IMR-90 (cell line): ENCODE measurements at regions of chr1 and their contacts with region 1.

Region 1: DNA sequence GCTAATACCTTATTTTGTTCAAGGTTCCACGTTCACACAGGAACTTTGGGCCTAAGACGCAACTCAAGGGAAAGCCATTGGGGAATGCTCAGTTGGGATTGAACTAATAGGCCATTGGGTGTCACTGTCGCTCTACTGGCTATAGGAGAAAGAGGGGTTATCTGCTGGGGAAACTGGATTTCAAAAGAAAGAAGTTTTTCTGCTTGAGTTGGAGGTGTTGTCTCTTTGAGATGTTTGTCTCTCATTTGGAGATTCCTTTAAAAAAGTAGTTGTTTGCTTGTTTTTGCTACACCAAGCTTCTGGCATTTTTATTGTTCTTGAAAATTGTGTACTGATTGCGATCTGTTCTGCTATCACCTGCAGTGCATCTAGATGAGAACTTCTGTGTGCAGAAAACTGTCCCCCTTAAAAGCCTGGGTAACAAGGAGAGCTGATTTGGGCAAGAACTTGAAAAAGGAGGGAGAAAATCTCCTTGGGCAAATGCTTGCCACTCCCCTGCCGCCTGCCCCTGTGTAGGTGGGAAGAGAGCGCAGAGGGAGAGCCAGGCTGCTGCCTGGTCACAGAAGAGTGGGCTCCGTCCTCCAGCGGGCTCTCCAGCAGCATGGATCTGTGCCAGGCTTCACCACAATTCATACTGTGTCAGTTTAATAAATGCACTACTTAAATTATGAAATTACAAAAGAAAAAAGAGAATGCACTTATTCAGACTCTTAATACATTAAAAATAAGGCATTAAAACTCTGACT is 39.9 kb downstream of the PEX14 start:
- DNase-seq: peak; percentile 61
- ATAC-seq: peak; percentile 24; the same call in 1 of the 2 replicates
- H3K4me3 ChIP-seq: no peak overlapping the region
- H3K27ac ChIP-seq: no peak overlapping the region
- H3K4me1 ChIP-seq: peaks cover 26% of the 10 kb centered on the region
- H3K27me3 ChIP-seq: no peaks in the 10 kb centered on the region
- CTCF ChIP-seq: peak; percentile 67
- POLR2A ChIP-seq: no peak
- RAD21 ChIP-seq: peak; percentile 82

Region 2: GRCh38 chr1:10484521-10484920 is 30.1 kb before region 1 on chr1:
- CTCF ChIA-PET with region 1: no interaction called
- POLR2A ChIA-PET with region 1: no interaction called
- dilution Hi-C with region 1: no loop called
- in situ Hi-C with region 1: no loop called
- intact Hi-C with region 1: no loop called
- DNase-seq: no peak
- ATAC-seq: no peak
- H3K4me3 ChIP-seq: no peak overlapping the region
- H3K27ac ChIP-seq: no peak overlapping the region
- H3K4me1 ChIP-seq: no peaks in the 10 kb centered on the region; the same call in 1 of the 2 replicates
- H3K27me3 ChIP-seq: no peaks in the 10 kb centered on the region
- CTCF ChIP-seq: no peak
- POLR2A ChIP-seq: no peak
- RAD21 ChIP-seq: no peak

Region 3: GRCh38 chr1:10502206-10502605 is 12.5 kb before region 1 on chr1:
- CTCF ChIA-PET with region 1: interaction called, 3 read pairs
- POLR2A ChIA-PET with region 1: interaction called, 13 read pairs
- dilution Hi-C with region 1: no loop called
- in situ Hi-C with region 1: no loop called
- intact Hi-C with region 1: no loop called
- DNase-seq: no peak
- ATAC-seq: no peak
- H3K4me3 ChIP-seq: no peak overlapping the region
- H3K27ac ChIP-seq: no peak overlapping the region
- H3K4me1 ChIP-seq: no peaks in the 10 kb centered on the region
- H3K27me3 ChIP-seq: no peaks in the 10 kb centered on the region
- CTCF ChIP-seq: no peak
- POLR2A ChIP-seq: no peak
- RAD21 ChIP-seq: no peak

Region 4: GRCh38 chr1:10765734-10766478 is 251.2 kb after region 1 on chr1:
- CTCF ChIA-PET with region 1: no interaction called
- POLR2A ChIA-PET with region 1: no interaction called
- dilution Hi-C with region 1: no loop called
- in situ Hi-C with region 1: no loop called
- intact Hi-C with region 1: no loop called
- DNase-seq: no peak
- ATAC-seq: no peak
- H3K4me3 ChIP-seq: no peak overlapping the region
- H3K27ac ChIP-seq: no peak overlapping the region
- H3K4me1 ChIP-seq: no peaks in the 10 kb centered on the region
- H3K27me3 ChIP-seq: peaks cover 46% of the 10 kb centered on the region
- CTCF ChIP-seq: no peak
- POLR2A ChIP-seq: no peak
- RAD21 ChIP-seq: no peak

Region 5: DNA sequence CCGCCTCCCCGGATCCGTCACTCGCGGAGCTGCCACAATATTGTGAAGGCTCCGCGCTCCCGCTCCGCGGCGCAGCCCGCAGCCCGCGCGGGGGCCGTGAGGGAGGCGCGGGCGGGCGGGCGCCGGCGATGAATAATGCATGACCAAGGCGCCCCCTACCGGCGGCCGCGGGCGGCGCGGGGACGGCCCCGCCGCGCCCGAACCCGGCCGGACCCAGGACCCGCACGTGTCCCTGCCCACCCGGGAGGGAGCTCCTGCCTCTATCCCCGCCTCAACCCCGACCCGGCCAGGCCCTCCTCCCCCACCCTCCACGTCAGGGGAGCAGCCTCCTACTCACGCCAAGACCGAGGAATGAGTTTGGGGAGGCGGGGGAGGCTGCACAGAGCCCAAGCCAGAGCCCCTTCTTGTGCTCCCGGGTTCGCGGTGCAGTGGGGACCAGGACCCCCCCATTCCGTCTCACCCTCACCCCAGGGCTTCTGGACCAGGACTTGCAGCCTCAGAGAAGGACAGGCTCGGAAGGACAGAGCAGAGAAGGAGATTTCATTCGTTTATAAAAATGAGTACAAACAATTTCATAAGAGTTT is 352.6 kb after region 1 on chr1:
- CTCF ChIA-PET with region 1: no interaction called
- POLR2A ChIA-PET with region 1: no interaction called
- dilution Hi-C with region 1: no loop called
- in situ Hi-C with region 1: loop called (anchors 5 kb)
- intact Hi-C with region 1: loop called (anchors 1 kb)
- DNase-seq: peak; percentile 18
- ATAC-seq: peak; percentile 98
- H3K4me3 ChIP-seq: peak overlapping the region; percentile 36
- H3K27ac ChIP-seq: no peak overlapping the region; the same call in 1 of the 2 replicates
- H3K4me1 ChIP-seq: peaks cover 7% of the 10 kb centered on the region
- H3K27me3 ChIP-seq: peaks cover 60% of the 10 kb centered on the region
- CTCF ChIP-seq: peak; percentile 87
- POLR2A ChIP-seq: no peak; the same call in 1 of the 2 replicates
- RAD21 ChIP-seq: peak; percentile 81

Region 6: DNA sequence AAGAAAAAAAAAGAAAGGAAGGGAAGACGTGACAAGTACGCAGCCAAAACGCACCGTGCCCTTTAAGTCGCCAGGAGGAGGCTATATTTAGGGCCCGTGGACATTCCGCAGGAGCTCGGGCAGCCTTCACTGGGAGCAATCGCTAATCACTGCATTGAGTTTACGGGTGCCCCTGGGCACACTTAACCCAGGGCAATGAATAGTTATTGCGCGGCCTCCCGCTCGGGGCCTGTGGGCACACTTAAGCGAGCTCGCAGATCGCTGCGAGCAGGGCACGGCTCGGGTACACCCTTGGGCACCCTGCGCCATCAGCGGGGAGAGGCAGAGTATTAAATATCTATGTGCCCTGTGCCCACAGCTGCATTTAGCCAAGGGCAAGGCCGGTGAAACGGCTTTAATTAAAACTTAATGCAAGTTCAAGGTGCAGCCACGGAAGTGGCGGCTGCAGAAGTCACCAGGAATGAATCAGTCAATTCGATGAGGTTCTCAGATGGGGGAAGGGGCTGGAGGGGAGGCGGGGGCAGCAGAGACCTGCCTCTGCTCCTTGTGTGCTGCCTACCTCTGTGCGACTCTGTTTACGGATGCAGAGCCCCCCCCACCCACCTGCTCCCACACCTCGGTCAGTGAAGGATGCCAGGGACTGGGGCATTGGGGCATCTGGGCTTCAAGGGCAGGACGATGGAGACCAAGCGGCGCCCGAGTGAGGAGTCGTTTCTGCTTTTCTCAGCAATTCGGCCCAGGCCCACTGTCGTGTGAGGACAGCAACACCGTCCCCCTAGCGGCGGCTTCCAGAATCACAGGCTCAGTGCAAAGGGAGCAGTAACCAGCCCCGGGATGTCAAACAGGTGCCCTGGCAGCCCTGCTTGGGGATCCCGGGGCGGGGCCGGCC is 446.0 kb after region 1 on chr1:
- CTCF ChIA-PET with region 1: no interaction called
- POLR2A ChIA-PET with region 1: no interaction called
- dilution Hi-C with region 1: no loop called
- in situ Hi-C with region 1: no loop called
- intact Hi-C with region 1: loop called (anchors 1 kb)
- DNase-seq: peak; percentile 56
- ATAC-seq: peak; percentile 99
- H3K4me3 ChIP-seq: no peak overlapping the region
- H3K27ac ChIP-seq: no peak overlapping the region
- H3K4me1 ChIP-seq: no peaks in the 10 kb centered on the region
- H3K27me3 ChIP-seq: peaks cover 12% of the 10 kb centered on the region
- CTCF ChIP-seq: peak; percentile 73
- POLR2A ChIP-seq: no peak
- RAD21 ChIP-seq: peak; percentile 61

Region 7: GRCh38 chr1:11012250-11013171 is 497.8 kb after region 1 on chr1 and contains the start of gene TARDBP:
- CTCF ChIA-PET with region 1: no interaction called
- POLR2A ChIA-PET with region 1: no interaction called
- dilution Hi-C with region 1: no loop called
- in situ Hi-C with region 1: no loop called
- intact Hi-C with region 1: loop called (anchors 2 kb)
- DNase-seq: peak; percentile 83
- ATAC-seq: peak; percentile 94
- H3K4me3 ChIP-seq: peak within 1 kb of the TSS; percentile 89
- H3K27ac ChIP-seq: peak within 1 kb of the TSS; percentile 99
- H3K4me1 ChIP-seq: peaks cover 2% of the 10 kb centered on the region; the same call in 1 of the 2 replicates
- H3K27me3 ChIP-seq: no peaks in the 10 kb centered on the region
- CTCF ChIP-seq: no peak
- POLR2A ChIP-seq: peak; percentile 96
- RAD21 ChIP-seq: no peak
- total RNA-seq, gene TARDBP: 36.7 and 98.0 TPM in 2 replicates